ENCODE measurements at regions of chr2 and their contacts with region 1.

Region 1: DNA sequence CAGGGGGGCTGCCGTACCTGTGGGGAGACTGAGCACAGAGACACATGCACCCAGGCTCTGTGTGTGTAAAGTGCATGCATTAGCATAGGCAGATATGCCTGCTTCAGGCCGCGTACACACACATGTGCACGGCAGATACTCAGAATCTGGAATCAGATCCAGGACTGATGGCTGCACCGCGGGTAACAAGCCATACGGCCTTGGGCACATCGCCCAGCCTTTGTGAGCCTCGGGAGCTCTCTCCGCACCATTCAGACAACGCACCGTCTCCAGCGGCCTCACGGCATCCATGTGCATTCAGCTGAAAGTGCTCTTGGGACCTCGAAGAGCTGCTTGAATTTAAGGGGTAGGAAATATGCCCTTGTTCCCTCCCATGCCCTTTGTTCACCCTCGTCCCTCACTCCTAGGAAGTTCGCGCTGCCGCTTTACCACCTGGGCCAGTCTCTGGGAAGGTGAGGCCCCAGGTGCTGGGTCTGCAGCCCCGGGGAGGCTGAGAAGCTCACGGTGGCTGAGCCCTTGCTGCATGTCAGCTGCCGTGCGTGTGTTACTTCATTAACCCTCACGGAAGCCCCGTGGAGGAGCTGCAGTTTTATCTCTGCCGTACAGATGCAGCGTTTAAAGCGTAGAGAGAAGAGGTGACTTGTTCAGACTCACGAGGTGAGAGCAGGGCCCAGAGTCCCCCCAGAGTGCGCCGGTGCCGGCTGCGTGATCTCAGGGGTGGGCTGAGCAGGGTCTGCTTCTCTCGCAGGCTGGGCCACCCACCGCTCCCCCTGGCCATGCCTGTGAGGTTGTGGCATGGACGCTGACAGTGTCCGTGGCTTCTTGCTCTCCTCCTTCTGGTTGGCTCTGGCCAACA is 377.7 kb upstream of the MYT1L start:
- DNase-seq: no peak
- ATAC-seq: no peak
- H3K4me3 ChIP-seq: no peak overlapping the region
- H3K27ac ChIP-seq: no peak overlapping the region
- H3K4me1 ChIP-seq: no peaks in the 10 kb centered on the region
- H3K27me3 ChIP-seq: peaks cover 0 to 1% of the 10 kb centered on the region in 2 experiments; a peak in 1 of 4 replicates
- CTCF ChIP-seq: no peak
- EP300 ChIP-seq: no peak
- POLR2A ChIP-seq: no peak
- RAD21 ChIP-seq: no peak

Region 2: GRCh38 chr2:2675722-2676121 is 33.1 kb before region 1 on chr2:
- CTCF ChIA-PET with region 1: no interaction called
- POLR2A ChIA-PET with region 1: no interaction called
- RAD21 ChIA-PET with region 1: no interaction called
- SMC1A ChIA-PET with region 1: no interaction called
- in situ Hi-C with region 1: no loop called
- intact Hi-C with region 1: loop called (anchors 2 kb)
- DNase-seq: no peak
- ATAC-seq: no peak
- H3K4me3 ChIP-seq: no peak overlapping the region
- H3K27ac ChIP-seq: no peak overlapping the region
- H3K4me1 ChIP-seq: no peaks in the 10 kb centered on the region
- H3K27me3 ChIP-seq: no peaks in the 10 kb centered on the region; a peak in 1 of 4 replicates
- CTCF ChIP-seq: no peak
- EP300 ChIP-seq: no peak
- POLR2A ChIP-seq: no peak
- RAD21 ChIP-seq: no peak

Region 3: GRCh38 chr2:2868085-2868484 is 159.3 kb after region 1 on chr2:
- CTCF ChIA-PET with region 1: no interaction called
- POLR2A ChIA-PET with region 1: no interaction called
- RAD21 ChIA-PET with region 1: no interaction called
- SMC1A ChIA-PET with region 1: no interaction called
- in situ Hi-C with region 1: no loop called
- intact Hi-C with region 1: no loop called
- DNase-seq: no peak
- ATAC-seq: no peak
- H3K4me3 ChIP-seq: no peak overlapping the region
- H3K27ac ChIP-seq: no peak overlapping the region
- H3K4me1 ChIP-seq: no peaks in the 10 kb centered on the region
- H3K27me3 ChIP-seq: no peaks in the 10 kb centered on the region
- CTCF ChIP-seq: no peak
- EP300 ChIP-seq: no peak
- POLR2A ChIP-seq: no peak
- RAD21 ChIP-seq: no peak